ENCODE measurements at regions of chr16 and their contacts with region 1.

Region 1: DNA sequence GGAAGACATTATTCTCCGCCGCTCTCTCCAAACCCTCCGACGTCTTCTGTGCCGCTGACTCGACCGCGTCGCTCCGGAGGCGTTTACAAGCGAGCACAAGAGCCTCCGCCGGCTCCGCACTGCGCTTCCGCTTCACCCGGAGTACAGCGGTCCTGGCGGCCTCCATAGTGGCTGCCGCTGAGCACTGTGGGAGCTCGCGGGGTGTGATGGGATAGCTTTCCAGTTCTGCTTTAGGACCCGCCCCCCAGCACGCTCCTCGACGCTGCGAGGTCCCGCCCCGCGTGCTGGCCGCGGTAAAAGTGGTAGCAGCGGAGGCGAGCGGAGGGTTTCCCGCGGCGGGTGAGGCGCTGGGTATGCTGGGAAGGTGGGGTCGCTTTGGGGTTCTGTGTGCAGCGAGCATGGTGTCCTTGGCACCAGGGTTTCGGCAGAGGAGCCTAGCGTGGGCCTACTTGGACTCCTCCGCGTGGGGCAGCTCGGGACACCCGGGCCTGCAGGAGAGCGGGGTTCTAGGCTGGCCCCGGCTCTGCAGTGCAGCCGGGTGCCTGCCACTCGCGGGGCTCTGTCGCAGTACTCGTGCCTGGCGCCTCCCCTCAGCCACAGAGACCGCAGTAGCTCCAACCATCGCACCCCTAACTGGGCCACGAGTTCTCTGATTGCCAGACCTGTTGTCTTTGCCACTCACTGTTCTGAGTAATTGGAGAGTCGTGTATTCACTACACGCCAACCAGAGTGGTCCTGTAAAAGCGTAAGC is at the starts of genes PRMT7 and SLC7A6OS:
- DNase-seq: peak; percentile 90 to 96 (median 92)
- H3K4me3 ChIP-seq: peak within 1 kb of the TSS; percentile 91 to 95
- H3K4me3 Mint-ChIP-seq: peak within 1 kb of the TSS; percentile 96 to 99 (median 98)
- H3K27ac ChIP-seq: peak within 1 kb of the TSS; percentile 77
- H3K27ac Mint-ChIP-seq: peak within 1 kb of the TSS; percentile 75 to 98 (median 96)
- H3K4me1 ChIP-seq: peaks cover 54% of the 10 kb centered on the region
- H3K4me1 Mint-ChIP-seq: peaks cover 27 to 65% (median 46%) of the 10 kb centered on the region in 4 donors
- H3K27me3 ChIP-seq: no peaks in the 10 kb centered on the region
- H3K27me3 Mint-ChIP-seq: no peaks in the 10 kb centered on the region
- total RNA-seq, gene PRMT7: 98.4 to 104 TPM
- total RNA-seq, gene SLC7A6OS: 51.9 to 55.8 TPM

Region 2: DNA sequence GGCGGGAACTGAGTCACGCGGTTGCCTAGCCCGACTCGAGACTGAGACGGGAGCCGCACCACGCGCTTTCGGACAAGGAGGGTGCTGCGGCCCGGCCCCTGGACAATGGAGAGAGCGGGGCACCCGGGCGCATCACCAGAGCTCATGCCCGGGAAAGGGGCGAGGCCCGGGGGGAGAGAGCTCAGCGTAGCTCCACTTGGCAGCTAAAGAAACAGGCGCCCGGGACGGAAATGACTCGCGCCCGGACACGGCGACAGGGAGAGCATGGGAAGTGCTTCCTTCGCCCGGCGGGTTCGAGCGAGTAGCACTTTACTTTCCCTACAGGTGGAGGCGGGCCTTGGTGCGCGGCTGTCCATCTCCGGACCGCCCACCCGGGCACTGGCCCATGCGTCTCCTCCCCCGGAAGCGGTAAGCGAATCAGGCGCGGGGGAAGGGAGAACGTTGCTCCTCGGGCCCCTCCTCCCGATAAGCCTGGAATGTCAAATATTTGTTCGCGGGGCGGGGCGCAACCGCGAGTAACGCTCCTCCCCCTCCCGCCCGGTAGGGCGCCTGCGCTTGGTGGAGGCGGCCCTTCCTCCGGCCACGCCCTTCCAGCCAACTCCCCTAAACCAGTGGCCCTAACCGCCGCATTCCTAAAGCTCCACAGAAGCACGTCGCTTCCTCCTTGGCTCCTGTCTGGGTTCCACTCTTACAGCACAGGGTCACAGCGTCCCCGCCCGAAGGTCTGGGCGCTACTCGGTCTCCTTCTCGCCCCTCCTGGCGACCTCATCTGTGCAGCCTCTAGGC is 73.5 kb before region 1 on chr16:
- CTCF ChIA-PET with region 1: interaction called, 5 read pairs
- POLR2A ChIA-PET with region 1: interaction called, 16 read pairs
- intact Hi-C with region 1: no loop called
- DNase-seq: peak; percentile 83 to 90 (median 84)
- H3K4me3 ChIP-seq: peak overlapping the region; percentile 42 to 70
- H3K4me3 Mint-ChIP-seq: peak overlapping the region; percentile 88 to 98 (median 95)
- H3K27ac ChIP-seq: peak overlapping the region; percentile 44
- H3K27ac Mint-ChIP-seq: peak overlapping the region; percentile 90 to 97 (median 94)
- H3K4me1 ChIP-seq: peaks cover 30% of the 10 kb centered on the region
- H3K4me1 Mint-ChIP-seq: peaks cover 16 to 52% (median 34%) of the 10 kb centered on the region in 4 donors
- H3K27me3 ChIP-seq: no peaks in the 10 kb centered on the region
- H3K27me3 Mint-ChIP-seq: no peaks in the 10 kb centered on the region

Region 3: DNA sequence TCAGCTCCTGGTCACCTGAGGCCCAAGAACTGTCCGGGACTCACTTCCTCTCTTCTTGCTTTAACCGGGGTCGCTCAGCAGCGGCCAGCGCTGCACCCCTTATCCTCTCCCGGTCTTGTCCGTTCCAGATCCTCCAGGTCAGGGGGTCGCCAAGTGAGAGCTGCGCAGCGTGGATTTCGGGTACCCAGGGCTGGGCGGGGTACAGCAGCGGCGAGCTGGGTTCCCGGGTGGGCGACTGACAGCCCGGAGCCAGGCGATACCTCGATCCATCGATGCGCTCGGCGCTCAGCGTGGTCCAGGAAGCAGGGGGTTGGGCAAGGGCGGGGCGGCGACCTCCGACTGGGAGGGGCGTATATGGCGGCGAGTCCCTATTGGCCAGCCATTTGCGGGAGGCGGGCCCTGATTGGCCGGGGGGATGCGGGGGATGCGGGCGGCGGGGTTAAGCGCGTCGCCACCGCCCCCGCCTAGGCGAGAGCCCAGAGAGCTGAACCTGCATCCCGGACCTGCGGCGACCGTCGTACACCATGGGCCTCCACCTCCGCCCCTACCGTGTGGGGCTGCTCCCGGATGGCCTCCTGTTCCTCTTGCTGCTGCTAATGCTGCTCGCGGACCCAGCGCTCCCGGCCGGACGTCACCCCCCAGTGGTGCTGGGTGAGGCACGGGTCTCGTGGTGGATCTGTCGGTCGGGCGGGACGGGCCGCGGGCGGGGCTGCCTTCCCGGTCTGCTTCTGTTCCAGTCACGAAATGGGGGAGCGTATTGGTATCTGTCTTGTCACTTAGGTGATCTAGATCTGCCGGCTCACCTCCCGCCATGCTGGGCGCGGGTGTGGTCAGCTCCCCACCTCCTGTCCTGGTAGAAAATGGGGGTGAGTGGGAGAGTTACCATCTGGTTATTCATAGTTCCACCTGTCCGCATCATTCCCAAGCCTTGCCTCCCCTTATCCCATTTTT is 65.8 kb before region 1 on chr16 and contains the start of gene PLA2G15:
- CTCF ChIA-PET with region 1: interaction called, 8 read pairs
- POLR2A ChIA-PET with region 1: interaction called, 19 read pairs
- intact Hi-C with region 1: loop called (anchors 1 kb)
- DNase-seq: peak; percentile 93 to 96 (median 94)
- H3K4me3 ChIP-seq: peak within 1 kb of the TSS; percentile 91 to 98
- H3K4me3 Mint-ChIP-seq: peak within 1 kb of the TSS; percentile 93 to 99 (median 98)
- H3K27ac ChIP-seq: peak within 1 kb of the TSS; percentile 58
- H3K27ac Mint-ChIP-seq: peak within 1 kb of the TSS; percentile 77 to 95 (median 93)
- H3K4me1 ChIP-seq: peaks cover 27% of the 10 kb centered on the region
- H3K4me1 Mint-ChIP-seq: peaks cover 15 to 31% (median 20%) of the 10 kb centered on the region in 4 donors
- H3K27me3 ChIP-seq: no peaks in the 10 kb centered on the region
- H3K27me3 Mint-ChIP-seq: no peaks in the 10 kb centered on the region
- total RNA-seq, gene PLA2G15: 12.0 to 13.3 TPM

Region 4: DNA sequence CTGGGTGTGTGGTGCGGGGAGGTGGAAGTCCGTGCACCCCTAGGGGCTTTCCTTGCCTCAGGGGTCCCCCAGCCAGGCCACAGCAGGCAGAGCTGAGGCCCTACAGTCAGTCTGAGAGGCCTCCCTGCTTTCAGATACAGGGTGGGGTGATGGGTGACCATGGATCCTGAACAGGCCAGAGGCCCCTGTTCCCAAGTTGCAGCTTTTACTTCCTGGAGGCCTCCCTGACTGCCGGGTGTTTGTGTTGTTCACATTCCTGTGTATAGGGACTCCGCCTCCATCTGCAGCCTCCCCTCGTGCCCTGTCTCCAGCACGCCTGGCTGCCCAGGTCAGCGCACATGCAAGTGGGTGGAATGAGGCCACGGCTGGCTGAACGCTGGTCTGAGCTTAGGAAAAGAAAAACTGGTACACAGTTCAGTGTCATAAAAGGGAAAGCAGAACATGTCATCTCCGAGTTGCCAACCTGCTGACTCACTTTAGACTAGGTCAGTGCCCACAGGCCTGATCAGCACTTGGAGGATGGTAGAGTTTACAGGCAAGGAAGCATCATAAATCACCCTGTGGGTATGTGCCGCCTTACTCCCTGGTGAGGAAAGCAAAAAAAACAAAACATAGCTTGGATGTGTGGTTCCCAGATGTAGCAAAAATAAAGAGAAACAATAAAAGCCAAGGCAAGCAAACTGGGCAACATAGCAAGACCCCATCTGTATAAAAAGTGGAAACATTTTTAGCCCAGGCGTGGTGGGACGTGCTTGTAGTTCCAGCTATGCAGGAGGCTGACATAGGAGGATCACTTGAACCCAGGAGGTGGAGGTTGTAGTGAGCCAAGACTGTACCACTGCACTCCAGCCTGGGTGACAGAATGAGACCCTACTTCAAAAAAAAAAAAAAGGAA is 52.8 kb before region 1 on chr16:
- CTCF ChIA-PET with region 1: interaction called, 680 read pairs
- POLR2A ChIA-PET with region 1: interaction called, 1,508 read pairs
- intact Hi-C with region 1: no loop called
- DNase-seq: no peak
- H3K4me3 ChIP-seq: no peak overlapping the region
- H3K4me3 Mint-ChIP-seq: no peak overlapping the region
- H3K27ac ChIP-seq: no peak overlapping the region
- H3K27ac Mint-ChIP-seq: peak overlapping the region in 4 of 7 donors; percentile 12 to 86 (median 49)
- H3K4me1 ChIP-seq: peaks cover 10% of the 10 kb centered on the region
- H3K4me1 Mint-ChIP-seq: peaks cover 8 to 19% (median 9%) of the 10 kb centered on the region in 4 donors
- H3K27me3 ChIP-seq: no peaks in the 10 kb centered on the region
- H3K27me3 Mint-ChIP-seq: no peaks in the 10 kb centered on the region

Region 5: DNA sequence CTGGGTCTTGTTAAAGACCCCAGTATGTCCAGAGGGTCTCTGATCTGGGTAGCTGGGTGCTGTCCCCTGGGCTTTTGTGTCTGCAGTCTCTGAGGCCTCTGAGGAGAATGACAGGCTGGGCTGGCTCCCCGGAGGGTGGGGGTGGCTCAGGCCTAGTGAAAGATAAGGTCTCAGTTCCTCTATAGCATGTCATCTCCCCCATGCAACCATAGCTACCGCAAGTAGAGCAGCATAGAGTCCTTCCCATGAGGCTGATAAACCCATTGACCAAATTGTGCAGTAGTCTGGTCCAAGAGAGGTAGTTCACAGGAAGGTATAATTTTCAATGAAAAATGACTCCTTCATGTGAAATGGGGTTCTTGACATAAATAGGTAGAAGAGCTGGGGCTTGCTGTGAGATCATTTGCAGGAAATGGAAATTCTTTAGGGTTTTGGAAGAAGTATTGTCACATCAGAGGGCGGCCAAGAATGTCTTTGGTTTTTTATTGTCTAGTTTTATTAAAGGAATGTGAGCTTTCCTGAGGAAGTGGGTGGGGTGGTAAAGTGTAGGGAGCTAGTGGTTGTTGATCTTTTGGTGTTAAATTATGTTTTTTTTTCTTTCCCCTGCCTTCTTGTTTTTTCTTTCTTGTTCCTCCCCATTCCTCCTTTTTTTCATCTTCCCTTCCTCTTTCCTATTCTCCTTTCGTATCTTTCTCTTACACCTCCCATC is 21.2 kb before region 1 on chr16:
- CTCF ChIA-PET with region 1: interaction called, 21 read pairs
- POLR2A ChIA-PET with region 1: interaction called, 1,508 read pairs
- intact Hi-C with region 1: loop called (anchors 1 kb)
- DNase-seq: peak; percentile 41 to 72 (median 56)
- H3K4me3 ChIP-seq: peak overlapping the region in 1 of 2 donors; percentile 4
- H3K4me3 Mint-ChIP-seq: peak overlapping the region; percentile 32 to 83 (median 66)
- H3K27ac ChIP-seq: peak overlapping the region; percentile 52
- H3K27ac Mint-ChIP-seq: peak overlapping the region; percentile 82 to 91 (median 89)
- H3K4me1 ChIP-seq: peaks cover 83% of the 10 kb centered on the region
- H3K4me1 Mint-ChIP-seq: peaks cover 63 to 92% (median 80%) of the 10 kb centered on the region in 4 donors
- H3K27me3 ChIP-seq: no peaks in the 10 kb centered on the region
- H3K27me3 Mint-ChIP-seq: no peaks in the 10 kb centered on the region

Region 6: DNA sequence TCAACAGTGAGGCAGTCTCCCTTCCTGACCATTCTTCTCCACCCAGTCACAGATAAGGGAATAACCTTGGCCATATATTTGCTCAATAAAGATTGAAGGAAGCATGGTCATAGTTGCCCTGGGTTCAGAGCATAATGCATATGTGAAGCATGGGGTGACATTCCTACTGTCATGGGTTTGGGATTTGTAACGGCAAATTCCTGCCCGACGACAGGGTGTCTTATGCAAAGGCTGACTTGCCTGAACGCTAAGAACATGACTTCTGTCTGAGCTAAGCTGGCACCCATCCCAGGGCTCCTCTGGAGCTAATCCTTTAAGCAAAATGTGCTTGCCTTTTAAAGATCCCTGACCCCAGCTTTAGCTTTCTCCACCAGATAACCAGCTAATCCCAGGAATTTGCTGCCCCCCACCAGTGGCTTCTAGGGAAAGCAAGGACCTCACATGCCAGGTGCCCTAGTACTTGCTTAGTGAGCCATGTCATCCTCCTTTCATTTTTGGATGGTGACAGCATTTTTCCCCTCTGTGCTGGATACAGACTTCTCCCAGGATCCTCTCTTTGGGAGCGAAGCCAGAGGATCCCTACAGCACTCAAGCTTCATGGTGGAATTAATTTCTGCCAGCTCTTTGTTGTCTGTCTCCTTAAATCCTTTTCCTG is 11.9 kb before region 1 on chr16:
- CTCF ChIA-PET with region 1: interaction called, 10 read pairs
- POLR2A ChIA-PET with region 1: interaction called, 1,508 read pairs
- intact Hi-C with region 1: no loop called
- DNase-seq: no peak
- H3K4me3 ChIP-seq: no peak overlapping the region
- H3K4me3 Mint-ChIP-seq: no peak overlapping the region
- H3K27ac ChIP-seq: no peak overlapping the region
- H3K27ac Mint-ChIP-seq: peak overlapping the region in 5 of 7 donors; percentile 14 to 78 (median 29)
- H3K4me1 ChIP-seq: no peaks in the 10 kb centered on the region
- H3K4me1 Mint-ChIP-seq: peaks cover 12 to 28% (median 18%) of the 10 kb centered on the region in 4 donors
- H3K27me3 ChIP-seq: no peaks in the 10 kb centered on the region
- H3K27me3 Mint-ChIP-seq: no peaks in the 10 kb centered on the region